ENCODE measurements at regions of chr10 and their contacts with region 1.

Region 1: GRCh38 chr10:35300063-35300699 is 36.1 kb upstream of the CCNY start:
- DNase-seq: no peak
- ATAC-seq: peak in 3 of 8 donors; percentile 25 to 63 (median 42)
- H3K4me3 ChIP-seq: no peak overlapping the region
- H3K27ac ChIP-seq: no peak overlapping the region
- H3K4me1 ChIP-seq: peaks cover 0 to 7% (median 0%) of the 10 kb centered on the region in 9 donors
- H3K27me3 ChIP-seq: peaks cover 0 to 4% (median 0%) of the 10 kb centered on the region in 7 donors
- CTCF ChIP-seq: no peak

Region 2: DNA sequence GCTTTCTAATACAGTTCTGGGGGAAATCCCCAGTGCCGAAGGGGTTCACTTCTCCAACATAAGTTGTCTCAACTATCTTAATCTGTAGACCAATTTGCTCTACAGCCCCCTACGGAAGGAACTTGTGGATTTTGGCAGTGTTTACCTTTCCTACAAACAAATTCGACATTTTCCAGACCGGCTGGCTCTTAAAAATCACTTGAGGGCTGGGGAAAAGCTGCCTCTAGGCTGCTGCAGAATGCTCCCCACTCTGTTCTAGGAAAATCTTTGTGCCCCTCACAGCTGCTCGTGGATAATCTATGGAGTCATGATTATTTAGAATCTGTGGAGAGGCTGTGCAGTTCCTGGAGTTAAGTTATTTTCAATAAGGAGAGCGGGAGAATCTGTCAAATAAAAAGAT is 816.5 kb after region 1 on chr10:
- intact Hi-C with region 1: no loop called
- DNase-seq: peak in 1 of 2 donors; percentile 7
- ATAC-seq: peak in 5 of 8 donors; percentile 12 to 68 (median 36)
- H3K4me3 ChIP-seq: no peak overlapping the region
- H3K27ac ChIP-seq: peak overlapping the region in 4 of 10 donors; percentile 9 to 41 (median 19)
- H3K4me1 ChIP-seq: peaks cover 0 to 52% (median 24%) of the 10 kb centered on the region in 9 donors
- H3K27me3 ChIP-seq: no peaks in the 10 kb centered on the region
- CTCF ChIP-seq: no peak

Region 3: DNA sequence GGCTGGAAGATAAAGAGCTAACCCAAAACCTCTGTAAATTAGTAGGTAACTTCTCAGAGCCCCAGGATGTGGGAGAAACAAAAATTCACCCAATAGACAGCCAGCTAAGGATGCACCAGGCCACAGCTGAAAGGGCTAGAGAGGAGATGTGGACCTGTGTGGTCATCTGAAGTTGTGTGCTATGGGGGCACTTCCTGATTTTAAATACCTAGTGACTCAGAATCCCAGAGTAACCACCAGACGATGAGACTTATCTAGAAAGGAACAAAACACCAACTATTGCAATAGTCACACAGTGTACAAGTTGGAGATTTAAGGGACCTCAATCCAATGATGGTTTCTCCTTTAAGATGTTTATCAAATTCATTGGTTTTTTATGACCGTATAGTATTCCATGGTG is 1416.9 kb after region 1 on chr10:
- intact Hi-C with region 1: loop called in 1 of 10 experiments (anchors 10 kb)
- DNase-seq: no peak
- ATAC-seq: no peak
- H3K4me3 ChIP-seq: no peak overlapping the region
- H3K27ac ChIP-seq: no peak overlapping the region
- H3K4me1 ChIP-seq: no peaks in the 10 kb centered on the region
- H3K27me3 ChIP-seq: no peaks in the 10 kb centered on the region
- CTCF ChIP-seq: no peak

Measured in heart right ventricle (tissue), 16 donors.